ENCODE measurements at regions of chr12 and their contacts with region 1.

Region 1: DNA sequence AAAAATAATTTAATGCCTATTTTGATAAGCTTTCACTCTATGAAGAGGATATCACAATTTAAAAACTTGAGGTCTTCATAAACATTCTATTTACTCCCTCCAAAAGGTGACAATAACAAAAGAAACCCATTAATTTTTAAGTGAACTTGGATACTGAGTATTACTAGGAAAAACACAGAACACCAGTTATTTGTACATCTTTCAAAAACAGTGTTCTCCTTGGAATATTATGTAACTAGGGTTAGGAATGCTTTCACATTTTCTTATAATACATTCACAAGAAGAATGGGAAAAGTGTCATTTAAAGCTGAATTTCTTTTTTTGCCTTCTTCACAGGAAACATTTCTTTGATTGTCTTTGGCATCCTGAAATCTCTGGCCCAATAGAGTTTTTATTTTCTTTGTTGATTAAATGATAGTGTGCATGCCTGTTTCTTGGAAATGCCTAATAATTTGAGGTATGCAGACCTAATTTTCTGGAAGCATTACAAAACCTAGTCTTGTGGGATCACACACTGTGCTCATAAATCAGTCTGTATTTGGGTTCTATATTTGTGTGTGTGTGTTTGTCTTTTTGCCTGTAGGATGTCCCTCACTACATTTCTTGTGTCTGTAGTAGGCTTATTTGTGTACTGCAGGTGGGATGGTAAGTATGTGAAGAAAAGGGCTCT is 76.5 kb downstream of the WNK1 start:
- DNase-seq: no peak
- ATAC-seq: peak in 2 of 8 donors; percentile 19 to 29
- H3K4me3 ChIP-seq: no peak overlapping the region
- H3K27ac ChIP-seq: no peak overlapping the region
- H3K4me1 ChIP-seq: peaks cover 0 to 29% (median 20%) of the 10 kb centered on the region in 9 donors
- H3K27me3 ChIP-seq: no peaks in the 10 kb centered on the region
- CTCF ChIP-seq: no peak

Region 2: DNA sequence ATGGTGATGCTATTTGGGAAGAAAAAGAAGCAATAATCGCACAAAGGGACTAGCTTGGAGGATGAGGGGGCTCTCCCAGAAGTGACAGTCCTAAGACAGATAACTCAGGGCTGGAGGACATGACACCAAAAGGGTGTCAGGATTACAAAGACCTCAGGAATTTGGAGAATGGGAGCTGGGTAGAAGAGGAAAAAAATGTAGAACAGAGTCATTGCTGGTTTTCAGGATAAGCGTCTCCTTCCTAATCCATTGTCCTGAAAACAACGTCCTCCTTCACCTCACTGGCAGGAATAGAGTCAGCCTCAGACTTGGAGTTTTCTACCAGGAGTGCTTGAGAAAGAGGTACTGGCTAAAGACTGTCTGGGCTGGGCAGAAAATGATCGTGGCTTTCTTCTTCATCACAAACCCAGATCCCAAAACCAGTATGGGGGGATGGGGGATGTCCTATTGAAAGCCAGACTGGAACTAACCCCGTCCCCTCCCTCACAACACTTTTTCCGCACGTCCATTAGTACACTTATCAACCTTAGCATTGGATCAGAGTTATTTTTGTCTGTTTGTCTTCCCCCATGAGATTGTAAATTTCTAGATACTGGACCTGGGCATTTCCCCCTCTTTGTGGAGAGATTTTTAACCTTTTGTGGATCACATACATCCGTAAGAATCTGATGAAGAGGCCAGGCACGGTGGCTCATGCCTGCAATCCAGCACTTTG is 354.8 kb before region 1 on chr12:
- intact Hi-C with region 1: no loop called
- DNase-seq: no peak
- ATAC-seq: peak in 6 of 8 donors; percentile 49 to 83 (median 66)
- H3K4me3 ChIP-seq: no peak overlapping the region
- H3K27ac ChIP-seq: peak overlapping the region in 9 of 10 donors; percentile 1 to 83 (median 69)
- H3K4me1 ChIP-seq: peaks cover 0 to 70% (median 6%) of the 10 kb centered on the region in 9 donors
- H3K27me3 ChIP-seq: peaks cover 0 to 15% (median 5%) of the 10 kb centered on the region in 7 donors
- CTCF ChIP-seq: no peak

Region 3: DNA sequence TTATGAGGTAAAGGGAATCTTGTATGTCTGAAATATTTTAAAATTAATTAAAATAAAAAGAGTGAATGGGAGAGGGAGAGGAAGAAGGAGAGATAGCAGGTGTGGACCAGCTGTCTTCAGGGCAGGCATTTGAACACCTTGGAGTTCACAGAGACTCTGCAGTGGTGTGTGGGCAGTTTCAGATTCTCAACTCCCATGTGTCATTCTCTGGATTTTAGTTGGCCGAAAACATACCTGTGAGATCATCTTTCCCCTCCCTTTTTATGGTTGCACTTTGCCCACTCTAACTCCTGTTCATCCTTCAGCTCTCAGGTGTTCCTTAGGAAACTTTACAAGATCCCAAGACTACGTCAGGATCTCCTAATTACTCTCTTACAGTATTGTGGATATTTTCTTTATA is 270.3 kb after region 1 on chr12:
- intact Hi-C with region 1: loop called in 1 of 10 experiments (anchors 5 kb)
- DNase-seq: no peak
- ATAC-seq: no peak
- H3K4me3 ChIP-seq: no peak overlapping the region
- H3K27ac ChIP-seq: no peak overlapping the region
- H3K4me1 ChIP-seq: peaks cover 0 to 23% (median 0%) of the 10 kb centered on the region in 9 donors
- H3K27me3 ChIP-seq: no peaks in the 10 kb centered on the region
- CTCF ChIP-seq: no peak